Transverse colon (tissue), 4 donors: ENCODE measurements at regions of chr21 and their contacts with region 1.

Region 1: GRCh38 chr21:42440187-42440792 is 36.6 kb downstream of the UBASH3A start:
- DNase-seq: peak; percentile 4
- H3K4me3 ChIP-seq: no peak overlapping the region
- H3K27ac ChIP-seq: no peak overlapping the region
- H3K4me1 ChIP-seq: no peaks in the 10 kb centered on the region
- H3K27me3 ChIP-seq: no peaks in the 10 kb centered on the region
- CTCF ChIP-seq: no peak
- EP300 ChIP-seq: no peak
- POLR2A ChIP-seq: no peak

Region 2: DNA sequence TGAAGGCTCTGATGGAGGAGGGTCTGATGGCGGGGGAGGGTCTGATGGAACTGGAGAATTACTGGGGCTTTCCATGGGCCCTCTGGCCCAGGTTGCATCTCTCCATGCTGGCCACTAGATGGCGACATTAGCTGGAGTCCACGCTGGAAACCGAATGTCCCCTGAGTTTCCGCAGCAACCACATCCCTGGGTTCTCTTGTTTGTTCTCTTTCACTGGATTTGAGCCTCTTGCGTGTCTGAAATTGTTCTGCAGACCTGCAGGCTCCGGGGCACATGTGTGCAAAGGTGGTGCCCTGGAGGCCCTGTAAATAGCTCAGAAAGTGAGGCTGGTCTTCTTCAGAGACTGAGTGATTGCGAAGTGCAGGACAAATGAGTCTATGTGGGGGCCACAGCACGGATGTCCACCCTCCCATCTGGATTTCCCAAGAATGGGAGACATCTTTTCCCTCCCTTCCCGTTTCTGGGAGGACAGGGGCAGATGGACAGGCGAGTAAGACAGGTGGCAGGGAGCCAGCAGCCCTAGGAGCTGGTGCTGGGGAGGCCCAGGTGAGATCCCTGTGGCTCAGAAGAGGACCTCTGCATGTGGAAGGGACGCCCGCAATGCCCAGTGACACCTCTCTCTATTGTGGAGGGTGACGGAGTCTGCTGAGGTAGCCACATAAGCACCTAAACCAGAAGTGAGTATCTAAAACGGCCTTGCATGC is 294.6 kb before region 1 on chr21:
- in situ Hi-C with region 1: loop called in 3 of 4 experiments (anchors 10 kb)
- intact Hi-C with region 1: no loop called
- DNase-seq: peak; percentile 66
- H3K4me3 ChIP-seq: no peak overlapping the region
- H3K27ac ChIP-seq: no peak overlapping the region
- H3K4me1 ChIP-seq: peaks cover 0 to 10% (median 4%) of the 10 kb centered on the region in 4 donors
- H3K27me3 ChIP-seq: no peaks in the 10 kb centered on the region
- CTCF ChIP-seq: peak; percentile 87 to 97 (median 95)
- EP300 ChIP-seq: no peak
- POLR2A ChIP-seq: no peak

Region 3: DNA sequence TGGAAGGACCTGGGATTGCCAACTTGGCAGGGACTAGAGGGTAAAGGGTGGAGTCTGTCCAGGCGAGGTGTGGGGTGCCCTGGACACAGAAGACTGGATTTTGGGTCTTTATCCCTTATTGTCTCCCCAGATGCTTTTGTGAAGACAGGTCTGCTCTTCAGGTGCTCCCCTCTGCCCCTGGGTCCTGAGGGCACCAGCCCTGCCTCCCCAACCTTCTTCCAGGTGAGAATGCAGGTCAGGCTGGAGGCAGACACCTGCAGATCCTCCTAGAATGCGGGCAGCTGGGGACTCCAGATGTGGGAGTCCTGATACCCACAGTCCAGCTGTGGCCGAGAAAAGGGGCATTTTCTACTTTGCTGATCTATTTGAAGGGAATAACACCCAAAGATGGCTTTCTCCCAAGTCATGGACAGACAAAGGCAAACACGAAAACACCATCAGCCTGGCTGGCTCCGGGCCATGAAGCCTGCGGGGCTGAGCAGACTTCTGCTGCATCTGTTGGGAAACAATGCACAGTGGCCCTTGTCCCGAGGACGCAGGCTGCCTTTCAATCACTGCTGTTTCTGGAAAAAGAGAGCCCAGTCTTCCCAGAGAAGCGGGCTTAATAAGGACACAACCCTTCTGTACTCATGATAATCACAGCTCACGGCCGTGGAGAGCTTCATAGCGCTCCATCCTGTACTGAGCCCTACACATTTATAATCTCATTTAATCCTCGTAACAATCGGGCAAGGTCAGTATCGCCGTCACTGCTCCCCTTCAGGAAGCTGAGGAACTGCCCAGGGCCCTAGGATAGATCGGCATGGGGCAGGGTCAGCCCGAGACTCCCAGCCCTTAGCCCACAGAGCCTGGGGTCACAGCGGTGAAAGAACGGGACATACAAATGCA is 283.4 kb before region 1 on chr21:
- in situ Hi-C with region 1: loop called in 2 of 4 experiments (anchors 10 kb)
- intact Hi-C with region 1: no loop called
- DNase-seq: peak; percentile 31
- H3K4me3 ChIP-seq: no peak overlapping the region
- H3K27ac ChIP-seq: no peak overlapping the region
- H3K4me1 ChIP-seq: peaks cover 0 to 5% (median 2%) of the 10 kb centered on the region in 4 donors
- H3K27me3 ChIP-seq: no peaks in the 10 kb centered on the region
- CTCF ChIP-seq: no peak
- EP300 ChIP-seq: no peak
- POLR2A ChIP-seq: no peak

Region 4: GRCh38 chr21:42199488-42200458 is 240.5 kb before region 1 on chr21:
- in situ Hi-C with region 1: no loop called
- intact Hi-C with region 1: no loop called
- DNase-seq: peak; percentile 46
- H3K4me3 ChIP-seq: no peak overlapping the region
- H3K27ac ChIP-seq: peak overlapping the region in 2 of 4 donors; percentile 51 to 59
- H3K4me1 ChIP-seq: peaks cover 7 to 51% (median 24%) of the 10 kb centered on the region in 4 donors
- H3K27me3 ChIP-seq: no peaks in the 10 kb centered on the region
- CTCF ChIP-seq: no peak
- EP300 ChIP-seq: no peak
- POLR2A ChIP-seq: no peak

Region 5: GRCh38 chr21:42381334-42381984 is 58.8 kb before region 1 on chr21:
- in situ Hi-C with region 1: loop called in 1 of 4 experiments (anchors 10 kb)
- intact Hi-C with region 1: no loop called
- DNase-seq: peak; percentile 63
- H3K4me3 ChIP-seq: no peak overlapping the region
- H3K27ac ChIP-seq: no peak overlapping the region
- H3K4me1 ChIP-seq: peaks cover 3 to 22% (median 9%) of the 10 kb centered on the region in 4 donors
- H3K27me3 ChIP-seq: no peaks in the 10 kb centered on the region
- CTCF ChIP-seq: peak; percentile 43 to 92 (median 76)
- EP300 ChIP-seq: no peak
- POLR2A ChIP-seq: no peak